CD8-positive, alpha-beta memory T cell (primary cell): ENCODE measurements at regions of chr19 and their contacts with region 1.

Region 1: DNA sequence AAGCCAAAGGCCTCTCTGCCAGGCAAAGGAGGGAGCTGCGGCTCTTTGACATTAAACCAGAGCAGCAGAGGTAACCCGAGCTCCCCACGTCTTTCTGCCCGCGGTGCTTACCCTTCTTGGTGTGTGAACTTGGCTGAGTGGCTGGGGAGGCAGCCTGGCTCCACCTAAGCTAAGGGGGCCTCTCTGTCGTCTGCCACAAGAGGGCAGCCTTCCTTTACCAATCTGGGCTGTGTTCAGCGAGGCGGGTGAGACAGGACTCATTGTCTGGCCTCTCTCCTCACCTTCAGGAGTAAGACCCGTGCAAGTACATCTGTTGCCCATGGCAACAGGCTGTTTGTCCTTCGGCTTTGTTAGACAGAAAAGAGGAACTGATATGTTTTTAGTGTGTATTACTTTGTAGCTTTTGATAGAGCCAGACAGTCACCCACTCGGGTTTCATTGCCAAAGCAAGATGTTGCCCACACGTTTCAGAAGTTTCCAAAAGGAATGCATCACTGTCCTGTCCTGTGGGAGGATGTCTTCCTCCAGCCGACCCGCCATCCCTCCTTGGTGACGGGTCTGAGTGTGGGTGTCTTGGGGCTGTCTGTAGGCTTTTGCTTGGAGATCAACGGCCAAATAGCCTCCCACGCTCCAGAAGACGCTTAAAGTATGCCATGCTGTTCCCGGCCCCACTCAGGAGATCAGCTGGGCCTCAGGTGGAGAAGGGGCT is 4.6 kb downstream of the POP4 start:
- DNase-seq: peak; percentile 74 to 91 (median 77)
- H3K4me3 ChIP-seq: no peak overlapping the region
- H3K4me3 Mint-ChIP-seq: peak overlapping the region in 4 of 7 donors; percentile 32 to 85 (median 64)
- H3K27ac ChIP-seq: no peak overlapping the region
- H3K27ac Mint-ChIP-seq: peak overlapping the region; percentile 47 to 91 (median 87)
- H3K4me1 ChIP-seq: peaks cover 23% of the 10 kb centered on the region
- H3K4me1 Mint-ChIP-seq: peaks cover 25 to 50% (median 33%) of the 10 kb centered on the region in 3 donors
- H3K27me3 ChIP-seq: no peaks in the 10 kb centered on the region
- H3K27me3 Mint-ChIP-seq: no peaks in the 10 kb centered on the region

Region 2: GRCh38 chr19:29526730-29527499 is 83.8 kb before region 1 on chr19:
- CTCF ChIA-PET with region 1: no interaction called
- POLR2A ChIA-PET with region 1: no interaction called
- DNase-seq: peak in 1 of 5 donors; percentile 36
- H3K4me3 ChIP-seq: no peak overlapping the region
- H3K4me3 Mint-ChIP-seq: peak overlapping the region in 6 of 7 donors; percentile 34 to 85 (median 60)
- H3K27ac ChIP-seq: no peak overlapping the region
- H3K27ac Mint-ChIP-seq: no peak overlapping the region
- H3K4me1 ChIP-seq: peaks cover 20% of the 10 kb centered on the region
- H3K4me1 Mint-ChIP-seq: peaks cover 17 to 41% (median 20%) of the 10 kb centered on the region in 3 donors
- H3K27me3 ChIP-seq: peaks cover 26% of the 10 kb centered on the region
- H3K27me3 Mint-ChIP-seq: peaks cover 58 to 66% of the 10 kb centered on the region in 2 donors

Region 3: GRCh38 chr19:29622138-29623070 is 11.7 kb after region 1 on chr19:
- CTCF ChIA-PET with region 1: interaction called, 88 read pairs
- POLR2A ChIA-PET with region 1: interaction called, 14 read pairs
- DNase-seq: peak; percentile 30 to 64 (median 38)
- H3K4me3 ChIP-seq: peak overlapping the region; percentile 0
- H3K4me3 Mint-ChIP-seq: peak overlapping the region; percentile 33 to 84 (median 76)
- H3K27ac ChIP-seq: no peak overlapping the region
- H3K27ac Mint-ChIP-seq: peak overlapping the region; percentile 85 to 97 (median 97)
- H3K4me1 ChIP-seq: peaks cover 54% of the 10 kb centered on the region
- H3K4me1 Mint-ChIP-seq: peaks cover 54 to 63% (median 61%) of the 10 kb centered on the region in 3 donors
- H3K27me3 ChIP-seq: no peaks in the 10 kb centered on the region
- H3K27me3 Mint-ChIP-seq: no peaks in the 10 kb centered on the region

Region 4: GRCh38 chr19:29671393-29672160 is 60.9 kb after region 1 on chr19:
- CTCF ChIA-PET with region 1: interaction called, 127 read pairs
- POLR2A ChIA-PET with region 1: interaction called, 46 read pairs
- DNase-seq: peak; percentile 73 to 96 (median 80)
- H3K4me3 ChIP-seq: peak overlapping the region; percentile 54
- H3K4me3 Mint-ChIP-seq: peak overlapping the region; percentile 61 to 95 (median 88)
- H3K27ac ChIP-seq: peak overlapping the region; percentile 77
- H3K27ac Mint-ChIP-seq: peak overlapping the region; percentile 93 to 100 (median 98)
- H3K4me1 ChIP-seq: peaks cover 99% of the 10 kb centered on the region
- H3K4me1 Mint-ChIP-seq: peaks cover 77 to 96% (median 87%) of the 10 kb centered on the region in 3 donors
- H3K27me3 ChIP-seq: no peaks in the 10 kb centered on the region
- H3K27me3 Mint-ChIP-seq: no peaks in the 10 kb centered on the region

Region 5: GRCh38 chr19:29687244-29687896 is 76.7 kb after region 1 on chr19:
- CTCF ChIA-PET with region 1: interaction called, 119 read pairs
- POLR2A ChIA-PET with region 1: interaction called, 4 read pairs
- DNase-seq: no peak
- H3K4me3 ChIP-seq: no peak overlapping the region
- H3K4me3 Mint-ChIP-seq: peak overlapping the region in 1 of 7 donors; percentile 65
- H3K27ac ChIP-seq: peak overlapping the region; percentile 67
- H3K27ac Mint-ChIP-seq: peak overlapping the region in 2 of 8 donors; percentile 47 to 57
- H3K4me1 ChIP-seq: peaks cover 10% of the 10 kb centered on the region
- H3K4me1 Mint-ChIP-seq: peaks cover 32 to 38% (median 37%) of the 10 kb centered on the region in 3 donors
- H3K27me3 ChIP-seq: no peaks in the 10 kb centered on the region
- H3K27me3 Mint-ChIP-seq: peaks cover 0 to 1% of the 10 kb centered on the region in 2 donors

Region 6: GRCh38 chr19:29745253-29745652 is 134.5 kb after region 1 on chr19:
- CTCF ChIA-PET with region 1: no interaction called
- POLR2A ChIA-PET with region 1: no interaction called
- DNase-seq: no peak
- H3K4me3 ChIP-seq: no peak overlapping the region
- H3K4me3 Mint-ChIP-seq: no peak overlapping the region
- H3K27ac ChIP-seq: no peak overlapping the region
- H3K27ac Mint-ChIP-seq: no peak overlapping the region
- H3K4me1 ChIP-seq: no peaks in the 10 kb centered on the region
- H3K4me1 Mint-ChIP-seq: no peaks in the 10 kb centered on the region
- H3K27me3 ChIP-seq: no peaks in the 10 kb centered on the region
- H3K27me3 Mint-ChIP-seq: peaks cover 0 to 15% of the 10 kb centered on the region in 2 donors

Region 7: GRCh38 chr19:29823581-29824325 is 213.0 kb after region 1 on chr19:
- CTCF ChIA-PET with region 1: no interaction called
- POLR2A ChIA-PET with region 1: no interaction called
- DNase-seq: no peak
- H3K4me3 ChIP-seq: no peak overlapping the region
- H3K4me3 Mint-ChIP-seq: no peak overlapping the region
- H3K27ac ChIP-seq: no peak overlapping the region
- H3K27ac Mint-ChIP-seq: no peak overlapping the region
- H3K4me1 ChIP-seq: no peaks in the 10 kb centered on the region
- H3K4me1 Mint-ChIP-seq: no peaks in the 10 kb centered on the region
- H3K27me3 ChIP-seq: no peaks in the 10 kb centered on the region
- H3K27me3 Mint-ChIP-seq: no peaks in the 10 kb centered on the region